GM18951 (cell line): ENCODE measurements at regions of chr19 and their contacts with region 1.

Region 1: DNA sequence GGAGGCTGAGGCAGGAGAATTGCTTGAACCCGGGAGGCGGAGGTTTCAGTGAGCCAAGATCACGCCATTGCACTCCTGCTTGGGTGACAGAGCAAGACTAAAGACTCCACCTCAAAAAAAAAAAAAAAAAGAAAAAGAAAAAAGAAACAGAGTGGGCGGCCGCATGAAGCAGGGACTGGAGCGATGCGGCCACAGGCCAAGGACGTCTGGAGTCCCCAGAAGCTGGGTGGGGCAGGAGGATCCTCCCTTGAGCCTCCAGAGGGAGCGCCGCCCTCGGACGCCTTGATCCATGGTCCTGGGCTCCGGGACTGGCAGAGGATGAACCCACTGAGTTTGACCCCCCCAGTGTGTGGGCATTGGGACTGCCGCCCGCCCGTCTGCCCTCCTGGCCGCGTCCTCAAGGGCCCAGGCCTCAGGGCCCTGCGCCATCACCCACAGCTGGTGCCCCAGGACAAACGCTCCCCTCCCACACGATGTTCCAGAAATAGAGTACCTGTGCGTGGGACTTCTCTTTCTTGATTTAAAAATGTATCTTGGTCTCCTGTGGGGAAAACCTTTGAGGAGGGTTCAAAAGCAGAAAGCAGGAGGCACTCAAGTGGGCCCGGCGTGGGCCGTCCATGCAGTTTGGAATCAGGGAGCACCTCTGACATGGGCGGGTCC is 15.5 kb downstream of the BTBD2 start:
- POLR2A ChIP-seq: no peak

Region 2: DNA sequence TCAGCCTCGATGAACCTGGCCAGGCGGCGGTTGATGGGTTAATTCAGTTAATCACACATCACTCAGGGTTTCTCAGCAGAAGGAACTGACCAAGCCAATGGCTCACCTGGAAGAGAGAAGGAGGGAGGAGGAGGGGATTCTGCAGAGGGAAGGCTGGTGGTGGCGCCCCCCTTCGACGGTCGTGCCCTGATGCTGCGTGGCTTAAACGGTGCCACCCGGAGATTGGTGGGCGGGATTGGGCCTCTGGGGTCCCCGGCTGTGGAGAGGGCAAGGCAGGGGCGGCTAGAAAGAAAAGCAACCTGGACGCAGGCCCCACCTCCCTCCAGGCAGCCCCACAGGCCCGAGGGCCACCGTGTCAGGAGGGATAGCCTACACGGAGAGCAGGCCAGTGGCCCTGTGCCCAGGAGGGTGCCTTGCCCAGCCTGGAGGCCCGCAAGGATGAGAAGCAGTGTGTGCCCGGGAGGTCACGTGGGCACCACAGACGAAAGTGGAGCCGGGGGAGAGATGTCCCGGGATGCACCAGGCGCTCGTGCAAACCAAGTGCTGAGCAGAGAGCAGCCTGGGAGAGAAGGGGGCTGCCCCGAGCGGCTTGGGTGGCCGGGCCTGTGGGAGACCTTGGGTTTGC is 43.0 kb before region 1 on chr19:
- in situ Hi-C with region 1: no loop called
- POLR2A ChIP-seq: no peak

Region 3: DNA sequence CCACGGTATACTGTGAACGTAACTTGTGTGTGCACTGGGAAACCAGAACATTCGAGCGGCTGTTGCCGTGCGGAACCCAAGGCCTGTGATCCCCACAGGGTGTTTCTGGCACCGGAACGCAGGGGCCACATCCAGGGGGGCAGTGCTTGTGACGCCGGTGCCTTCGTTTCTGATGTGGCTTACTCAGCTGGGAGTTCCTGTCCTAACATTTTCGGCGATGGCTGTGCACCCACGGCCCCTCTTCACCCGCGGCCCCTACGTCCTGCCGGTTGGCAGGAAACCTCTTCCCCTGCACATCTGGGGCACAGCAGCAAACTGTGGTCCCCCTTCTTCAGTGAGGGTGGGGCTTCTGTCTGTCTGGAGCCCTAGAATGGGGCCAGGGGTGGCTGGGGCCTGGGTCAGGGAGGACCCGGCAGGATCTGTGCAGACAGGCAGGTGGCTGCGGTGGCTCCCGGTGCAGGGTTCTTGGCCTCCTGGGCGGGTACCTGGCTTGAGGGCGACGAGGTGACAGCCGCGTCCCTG is 32.8 kb before region 1 on chr19:
- in situ Hi-C with region 1: loop called (anchors 5 kb)
- POLR2A ChIP-seq: no peak